PC-9 (cell line): ENCODE measurements at regions of chr7 and their contacts with region 1.

Region 1: GRCh38 chr7:101126651-101127280 is at the start of gene SERPINE1:
- DNase-seq: peak; percentile 51 to 92
- H3K4me3 ChIP-seq: peak within 1 kb of the TSS; percentile 45; the same call in 1 of the 2 replicates
- H3K27ac ChIP-seq: peak within 1 kb of the TSS; percentile 99
- H3K4me1 ChIP-seq: peaks cover 72% of the 10 kb centered on the region
- H3K27me3 ChIP-seq: no peaks in the 10 kb centered on the region
- CTCF ChIP-seq: peak; percentile 15; the same call in 1 of the 2 replicates
- total RNA-seq, gene SERPINE1: 36.2 and 45.8 TPM in 2 replicates

Region 2: DNA sequence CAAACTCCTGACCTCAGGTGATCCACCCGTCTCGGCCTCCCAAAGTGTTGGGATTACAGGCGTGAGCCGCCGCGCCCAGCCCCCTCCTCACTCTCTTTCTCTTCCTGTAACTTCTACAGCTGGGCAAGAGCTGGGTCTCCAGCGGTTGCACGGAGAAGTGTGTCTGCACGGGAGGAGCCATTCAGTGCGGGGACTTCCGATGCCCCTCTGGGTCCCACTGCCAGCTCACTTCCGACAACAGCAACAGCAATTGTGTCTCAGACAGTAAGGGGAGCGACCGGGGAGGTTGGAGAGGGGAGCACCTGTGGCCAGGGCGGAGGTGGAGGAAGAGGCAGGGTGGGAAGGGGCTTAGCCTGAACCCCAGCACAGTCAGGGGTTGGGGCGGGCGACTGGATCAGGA is 340.9 kb before region 1 on chr7:
- CTCF ChIA-PET with region 1: no interaction called
- POLR2A ChIA-PET with region 1: interaction called, 10 read pairs
- intact Hi-C with region 1: no loop called
- DNase-seq: no peak
- H3K4me3 ChIP-seq: no peak overlapping the region
- H3K27ac ChIP-seq: no peak overlapping the region
- H3K4me1 ChIP-seq: no peaks in the 10 kb centered on the region
- H3K27me3 ChIP-seq: no peaks in the 10 kb centered on the region
- CTCF ChIP-seq: no peak

Region 3: GRCh38 chr7:100803398-100804233 is 323.1 kb before region 1 on chr7:
- CTCF ChIA-PET with region 1: no interaction called
- POLR2A ChIA-PET with region 1: interaction called, 10 read pairs
- intact Hi-C with region 1: no loop called
- DNase-seq: peak in 1 of 2 experiments; percentile 76
- H3K4me3 ChIP-seq: no peak overlapping the region
- H3K27ac ChIP-seq: 0 out of 2 replicates have a peak overlapping the region, but pooled peaks have one; percentile 67
- H3K4me1 ChIP-seq: peaks cover 52% of the 10 kb centered on the region
- H3K27me3 ChIP-seq: no peaks in the 10 kb centered on the region
- CTCF ChIP-seq: no peak

Region 4: GRCh38 chr7:101077303-101078089 is 49.3 kb before region 1 on chr7:
- CTCF ChIA-PET with region 1: interaction called, 3 read pairs
- POLR2A ChIA-PET with region 1: interaction called, 15 read pairs
- intact Hi-C with region 1: no loop called
- DNase-seq: peak; percentile 86 to 96
- H3K4me3 ChIP-seq: no peak overlapping the region
- H3K27ac ChIP-seq: no peak overlapping the region
- H3K4me1 ChIP-seq: peaks cover 25% of the 10 kb centered on the region
- H3K27me3 ChIP-seq: no peaks in the 10 kb centered on the region
- CTCF ChIP-seq: peak; percentile 92

Region 5: GRCh38 chr7:101094416-101095375 is 32.1 kb before region 1 on chr7:
- CTCF ChIA-PET with region 1: interaction called, 17 read pairs
- POLR2A ChIA-PET with region 1: interaction called, 17 read pairs
- intact Hi-C with region 1: no loop called
- DNase-seq: peak in 1 of 2 experiments; percentile 58
- H3K4me3 ChIP-seq: no peak overlapping the region
- H3K27ac ChIP-seq: no peak overlapping the region
- H3K4me1 ChIP-seq: peaks cover 8% of the 10 kb centered on the region
- H3K27me3 ChIP-seq: no peaks in the 10 kb centered on the region
- CTCF ChIP-seq: peak; percentile 74

Region 6: DNA sequence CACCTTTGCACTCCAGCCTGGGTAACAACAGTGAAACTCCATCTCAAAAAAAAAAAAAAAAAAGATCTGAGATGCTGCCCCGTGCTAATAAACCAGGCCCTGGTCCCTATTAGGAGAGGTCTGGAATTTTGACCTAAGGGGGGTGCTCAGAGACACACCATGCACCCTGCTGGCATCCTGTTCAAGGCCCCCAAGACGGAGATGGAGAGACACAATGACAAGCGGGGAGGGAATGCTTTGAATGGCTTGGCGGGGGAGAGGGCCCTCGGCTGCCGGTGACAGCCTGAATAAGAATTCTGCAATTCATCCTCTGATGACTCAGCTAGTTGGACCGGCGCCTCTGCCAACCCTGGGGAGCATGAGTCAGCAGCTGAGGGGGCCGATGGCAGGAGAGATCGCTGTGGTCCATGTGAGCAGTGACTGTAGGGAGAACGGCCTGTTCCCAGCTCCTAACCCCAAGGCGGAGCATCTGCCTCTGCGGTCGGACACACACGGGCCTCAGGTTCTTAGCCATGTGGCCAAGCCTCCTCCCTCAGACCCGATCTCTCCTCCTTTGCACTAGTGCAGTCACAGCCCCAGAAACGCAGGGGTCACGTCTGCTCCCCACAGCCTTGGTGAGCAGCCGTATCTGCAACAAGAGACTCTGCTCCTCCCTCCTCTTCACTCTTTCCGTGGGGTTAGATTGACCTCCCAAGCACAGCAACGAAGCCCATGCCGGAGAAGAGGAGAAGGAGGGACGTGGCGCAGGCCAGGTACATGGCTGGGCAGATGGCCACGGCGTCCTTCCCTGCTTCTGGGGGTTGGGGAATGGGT is 26.6 kb before region 1 on chr7:
- CTCF ChIA-PET with region 1: interaction called, 17 read pairs
- POLR2A ChIA-PET with region 1: interaction called, 22 read pairs
- intact Hi-C with region 1: loop called (anchors 1 kb)
- DNase-seq: peak; percentile 95 to 98
- H3K4me3 ChIP-seq: peak overlapping the region; percentile 43; the same call in 1 of the 2 replicates
- H3K27ac ChIP-seq: peak overlapping the region; percentile 93
- H3K4me1 ChIP-seq: peaks cover 53% of the 10 kb centered on the region
- H3K27me3 ChIP-seq: no peaks in the 10 kb centered on the region
- CTCF ChIP-seq: no peak

Region 7: GRCh38 chr7:101162551-101163278 is 35.9 kb after region 1 on chr7:
- CTCF ChIA-PET with region 1: no interaction called
- POLR2A ChIA-PET with region 1: no interaction called
- intact Hi-C with region 1: no loop called
- DNase-seq: peak; percentile 52 to 74
- H3K4me3 ChIP-seq: peak overlapping the region; percentile 86
- H3K27ac ChIP-seq: peak overlapping the region; percentile 79
- H3K4me1 ChIP-seq: peaks cover 63% of the 10 kb centered on the region
- H3K27me3 ChIP-seq: peaks cover 9% of the 10 kb centered on the region
- CTCF ChIP-seq: no peak